Common myeloid progenitor, CD34-positive (primary cell): ENCODE measurements at regions of chr3 and their contacts with region 1.

Region 1: DNA sequence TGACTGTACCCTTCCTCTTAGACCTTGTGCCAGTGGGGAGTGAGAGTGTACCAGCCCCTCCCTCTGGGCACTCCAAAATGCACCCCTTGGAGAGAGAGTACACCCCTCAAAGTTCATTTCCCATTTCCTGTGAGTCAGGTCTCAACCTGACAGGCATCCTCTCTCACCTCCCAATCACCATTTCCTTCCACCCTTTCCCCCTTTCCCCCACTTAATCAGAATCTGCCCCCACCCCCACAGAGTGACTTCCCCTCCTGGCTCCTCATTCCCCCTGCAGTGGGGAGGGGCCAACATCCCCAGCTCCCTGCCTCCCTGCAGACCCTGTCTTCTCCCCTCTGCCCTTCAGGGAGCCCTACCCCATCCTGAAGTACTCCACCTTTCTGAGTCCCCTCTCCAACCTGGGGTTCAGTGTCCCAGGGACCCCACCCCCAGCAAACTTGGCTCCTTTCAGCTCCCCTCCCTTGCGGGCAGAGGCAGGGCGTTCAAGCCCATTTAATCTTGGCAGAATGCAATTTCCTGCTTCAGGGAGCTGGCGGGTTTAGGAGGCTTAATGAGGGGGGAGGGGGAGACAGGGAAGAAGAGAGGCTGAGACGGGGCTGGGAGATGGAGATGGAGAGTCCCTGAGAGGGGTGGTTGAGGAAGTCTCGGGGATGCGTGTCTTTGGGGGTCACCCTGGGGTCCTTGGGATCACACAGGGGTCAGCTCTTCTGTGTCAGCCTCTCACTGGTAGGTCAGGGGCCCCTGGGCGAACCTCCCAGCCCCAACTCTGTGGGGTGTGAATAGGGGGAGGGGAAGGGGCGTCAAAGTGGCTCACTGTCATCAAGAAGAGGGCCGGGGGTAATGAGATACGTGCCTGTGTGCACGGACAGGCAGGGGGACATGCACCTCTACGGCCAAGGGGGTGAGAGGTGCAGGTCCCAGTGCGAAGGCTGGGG is 16.6 kb upstream of the SEMA3F start:
- DNase-seq: peak in 2 of 3 donors; percentile 31 to 35
- H3K4me3 ChIP-seq: peak overlapping the region in 1 of 7 experiments; percentile 34
- H3K27ac ChIP-seq: no peak overlapping the region
- H3K4me1 ChIP-seq: peaks cover 0 to 29% (median 20%) of the 10 kb centered on the region in 4 experiments
- H3K27me3 ChIP-seq: peaks cover 0 to 2% (median 0%) of the 10 kb centered on the region in 5 experiments

Region 2: DNA sequence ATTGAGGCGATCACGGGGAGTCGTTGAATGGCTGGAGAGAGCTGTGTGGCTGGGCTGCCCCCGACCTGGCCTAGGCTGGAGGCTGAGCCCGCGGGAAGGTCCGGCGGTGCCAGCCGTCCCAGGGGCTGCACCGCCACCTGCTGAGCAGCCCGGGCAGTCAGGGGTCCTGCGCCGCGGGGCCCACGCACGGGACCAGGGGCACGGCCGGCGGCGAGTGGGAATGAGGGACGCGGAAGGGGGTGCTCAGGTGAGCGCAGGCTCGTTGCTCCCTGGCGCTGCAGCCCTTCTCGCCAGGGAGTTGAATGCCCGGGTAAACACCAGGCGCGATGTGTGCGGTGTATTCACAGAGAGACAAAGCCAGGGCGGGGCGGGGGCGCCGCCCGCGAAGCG is 15.9 kb after region 1 on chr3:
- CTCF ChIA-PET with region 1: interaction called, 14 read pairs
- POLR2A ChIA-PET with region 1: no interaction called
- DNase-seq: no peak
- H3K4me3 ChIP-seq: peak overlapping the region; percentile 24 to 76 (median 59)
- H3K27ac ChIP-seq: no peak overlapping the region
- H3K4me1 ChIP-seq: peaks cover 0 to 29% (median 22%) of the 10 kb centered on the region in 4 experiments
- H3K27me3 ChIP-seq: peaks cover 0 to 45% (median 24%) of the 10 kb centered on the region in 5 experiments